ENCODE measurements at regions of chrX and their contacts with region 1.

Region 1: DNA sequence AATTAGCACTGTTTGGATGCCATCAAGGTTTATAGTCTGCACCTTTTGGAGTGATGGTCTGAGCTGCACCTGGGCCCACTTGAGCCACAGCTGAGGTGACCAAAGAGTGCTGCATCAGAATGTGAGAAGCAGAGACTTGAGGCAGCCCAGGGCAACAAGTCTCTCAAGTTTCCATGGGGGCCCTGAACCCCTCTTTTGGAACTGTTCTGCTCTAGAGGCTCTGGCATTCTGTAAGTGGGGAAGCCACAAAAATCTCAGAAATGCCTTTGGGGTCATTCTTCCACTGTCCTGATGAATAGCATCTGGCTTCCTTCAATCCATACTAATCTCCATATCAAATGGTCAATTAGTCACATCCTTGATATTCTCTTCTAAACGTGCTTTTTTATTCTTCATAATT is 298.4 kb upstream of the MAOA start:
- DNase-seq: no peak
- H3K4me3 Mint-ChIP-seq: no peak overlapping the region
- H3K27ac Mint-ChIP-seq: no peak overlapping the region
- H3K4me1 Mint-ChIP-seq: no peaks in the 10 kb centered on the region
- H3K27me3 Mint-ChIP-seq: no peaks in the 10 kb centered on the region

Region 2: DNA sequence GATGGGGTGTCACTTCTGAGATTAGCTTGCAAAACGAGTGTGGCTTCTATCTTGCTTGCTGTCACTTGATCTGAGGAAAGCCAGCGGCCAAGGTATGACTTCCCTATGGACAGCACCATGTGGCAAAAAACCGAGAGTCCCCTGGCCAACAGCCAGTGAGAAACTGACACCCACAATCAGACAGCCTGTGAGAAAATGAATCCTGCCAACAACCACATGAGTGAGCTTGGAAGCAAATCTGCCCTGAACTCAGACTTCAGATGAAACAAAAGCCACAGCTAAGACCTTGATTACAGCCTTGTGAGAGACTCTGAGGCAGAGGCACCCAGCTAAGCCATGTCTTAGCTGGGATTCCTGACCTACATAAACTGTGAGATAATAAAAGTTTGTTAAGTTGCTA is 625.2 kb before region 1 on chrX:
- CTCF ChIA-PET with region 1: no interaction called
- POLR2A ChIA-PET with region 1: no interaction called
- intact Hi-C with region 1: no loop called
- DNase-seq: no peak
- H3K4me3 Mint-ChIP-seq: no peak overlapping the region
- H3K27ac Mint-ChIP-seq: no peak overlapping the region
- H3K4me1 Mint-ChIP-seq: no peaks in the 10 kb centered on the region
- H3K27me3 Mint-ChIP-seq: no peaks in the 10 kb centered on the region

Region 3: DNA sequence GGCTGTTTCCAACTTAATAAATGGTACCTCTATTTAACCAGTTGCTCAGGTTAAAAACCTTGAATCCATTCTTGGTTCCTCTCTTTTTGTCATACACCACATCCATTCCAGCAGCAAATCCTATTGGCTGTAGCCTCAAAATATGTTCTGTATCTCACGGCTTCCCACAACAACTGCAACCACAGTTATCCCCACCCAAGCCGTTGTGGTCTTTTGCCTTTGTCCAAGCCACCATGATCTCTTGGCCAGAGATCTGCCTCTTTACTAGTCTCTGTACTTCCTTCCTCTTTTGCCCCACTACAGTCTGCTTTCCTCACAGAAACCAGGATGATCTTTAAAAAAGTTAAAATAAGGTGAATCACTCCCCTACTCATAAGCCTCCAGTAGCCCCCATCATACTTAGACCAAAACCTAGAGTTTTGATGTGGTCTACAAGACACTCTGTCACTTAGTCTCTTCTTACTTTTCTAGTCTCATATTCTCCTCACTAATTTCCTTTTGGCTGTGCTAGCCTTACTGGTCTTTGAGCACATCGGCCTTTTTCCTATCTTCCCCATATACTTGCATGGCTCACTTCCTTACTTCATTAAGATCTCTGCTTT is 308.7 kb after region 1 on chrX:
- CTCF ChIA-PET with region 1: no interaction called
- POLR2A ChIA-PET with region 1: no interaction called
- intact Hi-C with region 1: no loop called
- DNase-seq: no peak
- H3K4me3 Mint-ChIP-seq: no peak overlapping the region
- H3K27ac Mint-ChIP-seq: no peak overlapping the region
- H3K4me1 Mint-ChIP-seq: peaks cover 7% of the 10 kb centered on the region
- H3K27me3 Mint-ChIP-seq: no peaks in the 10 kb centered on the region

Region 4: DNA sequence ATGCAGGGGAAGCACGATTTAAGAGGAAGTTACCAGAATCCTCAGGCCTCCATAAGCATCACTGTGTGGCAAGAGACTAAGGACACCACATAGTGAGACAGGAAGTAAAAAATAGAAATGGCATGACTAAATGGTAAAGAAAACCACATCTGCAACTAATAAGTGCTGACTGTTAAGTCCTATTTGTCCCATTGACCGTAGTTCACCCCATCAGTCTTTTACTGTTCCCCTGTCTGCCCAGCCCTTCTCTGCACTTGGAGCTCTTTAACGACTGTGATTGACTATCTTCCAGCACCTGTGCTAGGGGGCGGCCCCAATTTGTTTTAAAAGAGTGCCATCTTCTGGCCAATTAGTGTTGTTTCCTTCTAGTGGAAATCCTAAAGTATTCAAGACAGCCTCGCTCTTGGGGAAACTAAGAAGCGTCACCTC is 392.5 kb after region 1 on chrX:
- CTCF ChIA-PET with region 1: no interaction called
- POLR2A ChIA-PET with region 1: no interaction called
- intact Hi-C with region 1: loop called (anchors 10 kb)
- DNase-seq: peak; percentile 48
- H3K4me3 Mint-ChIP-seq: no peak overlapping the region
- H3K27ac Mint-ChIP-seq: no peak overlapping the region
- H3K4me1 Mint-ChIP-seq: peaks cover 7% of the 10 kb centered on the region
- H3K27me3 Mint-ChIP-seq: no peaks in the 10 kb centered on the region

Measured in activated CD4-positive, alpha-beta memory T cell treated with anti-CD3 and anti-CD28 coated beads for 36 hours (primary cell).